Panc1 (cell line): ENCODE measurements at regions of chr17 and their contacts with region 1.

Region 1: DNA sequence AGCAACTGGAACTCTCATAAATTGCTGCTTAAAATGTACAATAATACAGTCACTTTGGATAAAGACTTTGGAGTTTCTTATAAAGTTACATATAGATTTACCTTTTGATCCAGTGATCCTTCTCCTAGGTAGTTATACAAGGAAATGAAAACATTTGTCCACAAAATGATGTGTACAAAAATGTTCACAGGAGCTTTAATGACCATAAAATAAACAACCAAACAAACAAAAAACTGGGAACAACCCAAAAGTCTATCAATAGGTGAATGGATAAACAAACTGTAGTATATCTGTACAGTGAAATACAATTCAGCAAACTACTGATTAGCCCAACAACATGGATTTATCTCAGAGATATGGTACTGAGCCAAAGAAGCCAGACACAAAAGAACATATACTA is 37.6 kb downstream of the TTLL6 start:
- DNase-seq: no peak
- ATAC-seq: no peak
- H3K4me3 ChIP-seq: no peak overlapping the region
- H3K27ac ChIP-seq: no peak overlapping the region
- H3K4me1 ChIP-seq: no peaks in the 10 kb centered on the region
- H3K27me3 ChIP-seq: no peaks in the 10 kb centered on the region; the same call in 1 of the 2 replicates
- CTCF ChIP-seq: no peak

Region 2: GRCh38 chr17:50013079-50013478 is 1233.7 kb after region 1 on chr17:
- CTCF ChIA-PET with region 1: no interaction called
- POLR2A ChIA-PET with region 1: interaction called, 10 read pairs
- in situ Hi-C with region 1: no loop called
- intact Hi-C with region 1: no loop called
- DNase-seq: no peak
- ATAC-seq: no peak
- H3K4me3 ChIP-seq: no peak overlapping the region
- H3K27ac ChIP-seq: no peak overlapping the region
- H3K4me1 ChIP-seq: no peaks in the 10 kb centered on the region
- H3K27me3 ChIP-seq: no peaks in the 10 kb centered on the region; the same call in 1 of the 2 replicates
- CTCF ChIP-seq: no peak